ENCODE measurements at regions of chr1 and their contacts with region 1.

Region 1: GRCh38 chr1:160046494-160047110 is 14.8 kb upstream of the PIGM start:
- DNase-seq: peak; percentile 44 to 46
- ATAC-seq: peak; percentile 70 to 91 (median 84)
- H3K4me3 ChIP-seq: peak overlapping the region in 3 of 10 donors; percentile 1 to 35 (median 22)
- H3K27ac ChIP-seq: no peak overlapping the region
- H3K4me1 ChIP-seq: peaks cover 4 to 13% (median 11%) of the 10 kb centered on the region in 9 donors
- H3K27me3 ChIP-seq: peaks cover 0 to 10% (median 4%) of the 10 kb centered on the region in 7 donors
- CTCF ChIP-seq: peak; percentile 41 to 67 (median 58)

Region 2: GRCh38 chr1:159712080-159712479 is 334.5 kb before region 1 on chr1:
- intact Hi-C with region 1: no loop called
- DNase-seq: no peak
- ATAC-seq: no peak
- H3K4me3 ChIP-seq: no peak overlapping the region
- H3K27ac ChIP-seq: no peak overlapping the region
- H3K4me1 ChIP-seq: no peaks in the 10 kb centered on the region
- H3K27me3 ChIP-seq: no peaks in the 10 kb centered on the region
- CTCF ChIP-seq: no peak

Region 3: DNA sequence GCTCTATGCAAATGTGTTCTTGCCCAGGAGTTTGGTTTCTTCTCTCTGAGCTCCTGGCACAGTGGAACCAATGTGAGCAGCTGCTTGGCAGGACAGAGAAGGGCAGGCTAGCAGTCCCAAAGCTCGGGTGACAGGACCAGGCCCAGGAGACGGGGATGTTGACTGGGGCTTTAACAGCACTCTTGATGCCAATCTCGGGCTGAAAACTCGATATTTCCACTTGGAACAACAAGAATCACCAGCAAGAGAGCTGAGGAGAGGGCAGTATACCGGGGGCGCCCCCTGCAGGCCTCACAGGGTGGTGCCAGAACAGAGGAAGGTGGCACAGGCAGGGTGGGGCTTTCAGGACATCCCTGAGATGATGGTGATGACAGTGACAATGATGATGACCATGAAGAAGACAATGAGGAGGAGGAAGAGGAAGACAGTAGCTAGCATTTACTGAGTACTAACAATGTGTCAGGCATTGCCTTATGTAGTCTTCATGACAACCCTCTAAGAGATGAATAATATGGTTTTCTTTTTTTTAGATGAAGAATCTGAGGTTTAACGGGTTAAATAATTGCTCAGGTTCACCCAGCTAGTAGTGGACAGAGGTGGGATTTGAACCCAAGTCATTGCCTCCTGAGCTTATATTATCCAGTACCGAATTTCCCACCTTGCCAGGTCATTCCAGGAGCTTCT is 32.1 kb after region 1 on chr1:
- intact Hi-C with region 1: loop called in 6 of 10 experiments (anchors 1 to 5 kb)
- DNase-seq: no peak
- ATAC-seq: peak in 2 of 8 donors; percentile 36 to 48
- H3K4me3 ChIP-seq: no peak overlapping the region
- H3K27ac ChIP-seq: no peak overlapping the region
- H3K4me1 ChIP-seq: peaks cover 0 to 41% (median 0%) of the 10 kb centered on the region in 9 donors
- H3K27me3 ChIP-seq: peaks cover 6 to 82% (median 64%) of the 10 kb centered on the region in 7 donors
- CTCF ChIP-seq: peak; percentile 24 to 88 (median 62)

Region 4: DNA sequence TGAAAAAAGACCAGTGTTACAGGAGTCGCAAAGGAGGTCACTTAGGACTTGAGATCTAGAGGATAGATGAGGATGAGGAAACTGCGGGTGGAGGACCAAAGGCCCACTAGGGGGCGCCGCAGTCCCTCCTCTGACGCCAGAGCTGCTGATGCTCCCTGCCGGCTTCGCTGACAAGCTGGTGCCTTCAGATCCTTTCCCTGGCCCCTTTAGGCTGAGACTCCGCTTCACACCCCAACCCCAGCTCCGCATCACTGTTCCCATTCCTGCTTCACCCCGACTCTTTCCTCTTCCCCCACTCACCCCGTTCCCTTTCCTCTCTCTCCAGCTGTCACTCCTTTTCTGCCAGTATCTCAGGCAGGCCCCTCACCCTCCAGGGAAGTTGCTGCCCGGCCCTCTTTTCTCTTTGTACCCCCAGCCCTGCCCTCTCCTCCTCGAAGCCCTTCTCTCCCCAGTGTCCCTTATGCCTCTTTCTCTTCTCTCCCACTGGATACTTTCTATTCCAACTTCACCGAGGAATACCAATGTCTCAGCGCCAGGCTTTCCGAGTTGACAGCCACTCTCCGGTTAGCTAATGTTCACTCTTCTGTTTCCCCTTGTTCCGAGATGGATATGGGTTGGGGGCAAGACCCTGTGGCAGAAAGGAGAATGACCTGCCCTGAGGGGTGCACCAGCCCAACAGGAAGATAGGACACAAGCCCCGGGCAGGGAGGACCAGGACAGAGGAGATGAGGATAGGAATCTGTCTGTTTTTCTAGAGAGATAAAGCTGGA is 39.3 kb after region 1 on chr1:
- intact Hi-C with region 1: loop called in 5 of 10 experiments (anchors 5 kb)
- DNase-seq: peak; percentile 76 to 84
- ATAC-seq: peak; percentile 59 to 87 (median 75)
- H3K4me3 ChIP-seq: no peak overlapping the region
- H3K27ac ChIP-seq: peak overlapping the region in 5 of 10 donors; percentile 42 to 71 (median 69)
- H3K4me1 ChIP-seq: peaks cover 0 to 11% (median 7%) of the 10 kb centered on the region in 9 donors
- H3K27me3 ChIP-seq: peaks cover 0 to 41% (median 36%) of the 10 kb centered on the region in 7 donors
- CTCF ChIP-seq: peak; percentile 75 to 92 (median 85)

Measured in heart right ventricle (tissue), 16 donors.